Activated T-helper 1 cell treated with anti-CD3 and anti-CD28 coated beads, Interleukin-12 subunit alpha, Interleukin-12 subunit beta, Interleukin-2, Interleukin-4 antibody, amounts not matched to agents 30 ng/mL and 10 ng/mL and 1 ng/mL, durations not matched to agents 14 hours and 24 hours and 36 hours (primary cell): ENCODE measurements at regions of chr14 and their contacts with region 1.

Region 1: GRCh38 chr14:21940887-21941856 is 267.6 kb upstream of the OR4E1 start:
- DNase-seq: no peak
- H3K4me3 Mint-ChIP-seq: peak overlapping the region; percentile 60
- H3K27ac Mint-ChIP-seq: peak overlapping the region; percentile 2
- H3K4me1 Mint-ChIP-seq: peaks cover 21% of the 10 kb centered on the region
- H3K27me3 Mint-ChIP-seq: peaks cover 16% of the 10 kb centered on the region

Region 2: GRCh38 chr14:21557084-21557901 is 383.9 kb before region 1 on chr14:
- intact Hi-C with region 1: no loop called
- DNase-seq: peak; percentile 62
- H3K4me3 Mint-ChIP-seq: no peak overlapping the region
- H3K27ac Mint-ChIP-seq: peak overlapping the region; percentile 68
- H3K4me1 Mint-ChIP-seq: peaks cover 8% of the 10 kb centered on the region
- H3K27me3 Mint-ChIP-seq: no peaks in the 10 kb centered on the region

Region 3: GRCh38 chr14:21965042-21965441 is 23.9 kb after region 1 on chr14:
- intact Hi-C with region 1: loop called (anchors 1 kb)
- DNase-seq: peak; percentile 35
- H3K4me3 Mint-ChIP-seq: peak overlapping the region; percentile 53
- H3K27ac Mint-ChIP-seq: peak overlapping the region; percentile 61
- H3K4me1 Mint-ChIP-seq: peaks cover 15% of the 10 kb centered on the region
- H3K27me3 Mint-ChIP-seq: peaks cover 2% of the 10 kb centered on the region